Heart left ventricle (tissue), 16 donors: ENCODE measurements at regions of chrX and their contacts with region 1.

Region 1: DNA sequence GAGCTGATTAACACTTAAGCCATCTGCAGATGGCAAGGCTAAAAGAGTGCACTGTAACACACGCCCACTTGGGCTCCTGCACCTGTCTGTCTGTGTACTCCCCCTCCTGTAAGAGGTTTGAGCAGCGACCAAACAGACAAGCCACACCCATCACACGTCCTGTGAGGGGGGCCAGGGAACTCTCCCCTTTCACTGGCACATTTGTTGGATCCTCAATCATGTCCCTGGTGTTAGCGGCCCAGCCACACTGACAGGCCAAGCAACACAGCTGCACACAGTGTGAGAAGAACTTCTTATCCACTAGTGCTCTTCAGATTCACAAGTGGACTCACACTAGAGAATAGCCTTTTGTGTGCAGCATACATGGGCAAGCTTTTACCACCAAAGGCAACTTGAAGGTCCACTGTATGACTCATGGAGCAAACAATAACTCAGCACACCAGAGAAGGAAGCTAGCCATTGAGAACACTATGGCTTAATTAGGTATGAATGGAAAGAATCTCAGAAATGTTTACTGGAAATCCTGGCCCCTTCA is 29.1 kb upstream of the UTP14A start:
- DNase-seq: no peak
- ATAC-seq: no peak
- H3K4me3 ChIP-seq: no peak overlapping the region
- H3K27ac ChIP-seq: no peak overlapping the region
- H3K4me1 ChIP-seq: no peaks in the 10 kb centered on the region
- H3K27me3 ChIP-seq: peaks cover 0 to 8% (median 0%) of the 10 kb centered on the region in 9 donors
- CTCF ChIP-seq: no peak
- POLR2A ChIP-seq: no peak

Region 2: GRCh38 chrX:129748305-129748704 is 128.5 kb before region 1 on chrX:
- intact Hi-C with region 1: loop called in 1 of 10 experiments (anchors 10 kb)
- DNase-seq: peak in 1 of 5 donors; percentile 18
- ATAC-seq: peak in 3 of 4 donors; percentile 62 to 85 (median 71)
- H3K4me3 ChIP-seq: no peak overlapping the region
- H3K27ac ChIP-seq: peak overlapping the region in 1 of 12 donors; percentile 17
- H3K4me1 ChIP-seq: no peaks in the 10 kb centered on the region
- H3K27me3 ChIP-seq: no peaks in the 10 kb centered on the region
- CTCF ChIP-seq: no peak
- POLR2A ChIP-seq: no peak

Region 3: GRCh38 chrX:130120746-130121504 is 244.1 kb after region 1 on chrX:
- intact Hi-C with region 1: no loop called
- DNase-seq: peak; percentile 76 to 85 (median 81)
- ATAC-seq: peak; percentile 44 to 77 (median 76)
- H3K4me3 ChIP-seq: peak overlapping the region in 11 of 12 donors; percentile 31 to 61 (median 46)
- H3K27ac ChIP-seq: peak overlapping the region in 11 of 12 donors; percentile 62 to 88 (median 75)
- H3K4me1 ChIP-seq: peaks cover 0 to 30% (median 7%) of the 10 kb centered on the region in 12 donors
- H3K27me3 ChIP-seq: peaks cover 0 to 9% (median 0%) of the 10 kb centered on the region in 9 donors
- CTCF ChIP-seq: peak; percentile 53 to 78 (median 64)
- POLR2A ChIP-seq: no peak